Heart left ventricle (tissue), 16 donors: ENCODE measurements at regions of chr17 and their contacts with region 1.

Region 1: DNA sequence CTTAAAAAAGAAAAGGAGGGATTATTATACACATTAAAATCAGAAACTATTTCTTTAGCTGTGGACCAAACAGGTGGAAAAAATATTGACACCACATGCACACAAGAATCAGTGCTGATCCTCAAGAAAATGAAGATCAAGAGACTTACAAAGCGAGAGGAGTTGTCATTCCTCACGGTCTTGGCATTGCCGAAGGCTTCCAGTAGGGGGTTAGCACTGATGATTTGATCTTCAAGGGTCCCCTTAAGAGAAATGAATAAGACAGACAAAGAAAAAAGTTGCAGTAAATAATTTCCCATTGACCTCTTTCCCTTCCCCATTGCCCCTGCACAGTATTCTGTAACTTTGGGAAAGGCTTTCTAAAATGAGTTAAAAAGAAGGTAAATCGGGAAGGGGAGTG is 6.0 kb downstream of the MYH4 start:
- DNase-seq: no peak
- ATAC-seq: no peak
- H3K4me3 ChIP-seq: no peak overlapping the region
- H3K27ac ChIP-seq: no peak overlapping the region
- H3K4me1 ChIP-seq: no peaks in the 10 kb centered on the region
- H3K27me3 ChIP-seq: no peaks in the 10 kb centered on the region
- CTCF ChIP-seq: no peak
- POLR2A ChIP-seq: no peak

Region 2: GRCh38 chr17:10513299-10514067 is 50.1 kb after region 1 on chr17:
- intact Hi-C with region 1: loop called in 1 of 10 experiments (anchors 10 kb)
- DNase-seq: peak in 1 of 5 donors; percentile 6
- ATAC-seq: peak in 3 of 4 donors; percentile 36 to 73 (median 70)
- H3K4me3 ChIP-seq: no peak overlapping the region
- H3K27ac ChIP-seq: no peak overlapping the region
- H3K4me1 ChIP-seq: no peaks in the 10 kb centered on the region
- H3K27me3 ChIP-seq: no peaks in the 10 kb centered on the region
- CTCF ChIP-seq: no peak
- POLR2A ChIP-seq: no peak

Region 3: DNA sequence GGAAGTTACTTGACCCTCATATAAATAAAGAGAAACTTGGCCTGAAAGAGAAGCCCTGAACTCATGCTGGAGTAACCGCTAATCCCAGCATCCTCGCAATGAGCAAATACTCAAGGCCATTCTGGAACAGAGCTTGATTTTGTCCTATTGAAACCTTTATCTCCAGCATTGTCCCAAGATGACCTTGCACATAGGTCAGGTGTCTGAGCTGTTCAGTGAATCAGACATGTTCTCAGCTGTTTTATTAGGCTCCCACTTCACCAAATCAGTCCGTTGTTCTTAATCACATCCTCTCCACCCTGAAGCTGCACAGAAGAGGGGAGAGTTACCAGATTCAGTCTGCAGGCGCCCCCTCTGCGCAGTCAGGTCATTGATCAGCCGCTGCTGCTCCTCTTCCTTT is 64.0 kb after region 1 on chr17:
- intact Hi-C with region 1: no loop called
- DNase-seq: no peak
- ATAC-seq: no peak
- H3K4me3 ChIP-seq: no peak overlapping the region
- H3K27ac ChIP-seq: no peak overlapping the region
- H3K4me1 ChIP-seq: no peaks in the 10 kb centered on the region
- H3K27me3 ChIP-seq: peaks cover 0 to 3% (median 0%) of the 10 kb centered on the region in 9 donors
- CTCF ChIP-seq: no peak
- POLR2A ChIP-seq: no peak

Region 4: DNA sequence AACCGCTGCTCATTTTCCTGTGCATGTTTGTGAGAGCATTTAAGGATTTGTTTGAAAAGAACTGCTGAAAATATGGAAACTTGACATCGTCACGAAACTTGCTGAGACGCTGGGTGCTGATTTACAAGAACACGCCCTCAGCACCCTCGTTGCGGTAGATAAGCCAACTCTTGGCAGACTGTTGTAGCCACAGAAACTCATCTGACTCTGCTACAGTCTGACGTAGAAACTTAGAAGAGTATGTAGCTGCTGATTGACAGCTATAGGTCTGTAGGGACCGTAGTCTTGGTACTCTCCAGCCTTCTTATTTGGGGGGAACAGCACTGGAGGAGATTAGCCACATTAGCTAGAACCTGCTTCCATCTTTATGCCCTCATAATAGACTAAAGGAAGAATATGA is 122.1 kb after region 1 on chr17:
- intact Hi-C with region 1: loop called in 1 of 10 experiments (anchors 10 kb)
- DNase-seq: no peak
- ATAC-seq: no peak
- H3K4me3 ChIP-seq: no peak overlapping the region
- H3K27ac ChIP-seq: no peak overlapping the region
- H3K4me1 ChIP-seq: no peaks in the 10 kb centered on the region
- H3K27me3 ChIP-seq: peaks cover 0 to 6% (median 0%) of the 10 kb centered on the region in 9 donors
- CTCF ChIP-seq: no peak
- POLR2A ChIP-seq: no peak